ENCODE measurements at regions of chr12 and their contacts with region 1.

Region 1: GRCh38 chr12:38906482-38907170 is 1.2 kb upstream of the CPNE8 start:
- DNase-seq: peak; percentile 91
- H3K4me3 ChIP-seq: peak overlapping the region; percentile 63 to 86 (median 72)
- H3K27ac ChIP-seq: peak overlapping the region; percentile 72
- H3K4me1 ChIP-seq: peaks cover 13% of the 10 kb centered on the region
- H3K27me3 ChIP-seq: no peaks in the 10 kb centered on the region
- CTCF ChIP-seq: peak; percentile 83 to 96

Region 2: DNA sequence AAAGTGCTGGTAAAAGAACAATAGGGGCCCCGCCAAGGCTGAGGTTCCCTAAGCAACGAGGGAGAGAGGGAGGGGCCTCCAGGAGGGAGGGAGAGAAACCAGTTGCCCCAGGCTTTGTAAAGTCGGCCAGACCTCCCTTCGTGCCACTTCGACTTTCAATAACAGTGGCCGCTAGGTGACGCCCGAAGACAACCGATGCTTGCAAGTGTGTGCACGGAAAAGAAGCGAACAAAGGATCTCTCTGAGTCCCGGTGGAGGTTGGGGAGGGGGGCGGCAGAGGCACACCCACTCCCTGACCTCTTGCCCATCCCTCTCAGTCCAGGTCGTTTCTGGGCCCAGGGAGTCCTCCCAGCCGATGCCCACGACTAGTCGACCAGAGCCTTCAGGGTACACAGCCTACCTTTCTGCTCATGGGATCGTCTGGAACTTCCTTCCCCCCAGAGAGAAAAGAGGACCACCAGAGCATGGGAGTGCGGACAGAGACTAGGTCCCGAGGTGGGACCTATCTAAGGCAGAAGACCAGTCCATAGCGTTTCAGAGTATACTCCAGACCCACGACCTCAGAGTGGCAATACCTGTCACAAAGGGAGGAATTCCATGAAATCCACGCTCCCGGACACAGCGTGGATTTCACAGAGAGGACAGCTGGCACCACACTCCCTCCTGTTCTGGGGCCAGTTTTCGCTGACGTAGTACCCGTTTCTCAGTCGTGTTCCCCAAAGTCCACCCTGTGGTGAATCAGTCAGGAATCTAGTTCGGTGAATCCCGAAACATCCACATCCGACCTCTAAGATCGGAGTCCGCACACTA is 852.8 kb before region 1 on chr12:
- CTCF ChIA-PET with region 1: no interaction called
- dilution Hi-C with region 1: no loop called
- in situ Hi-C with region 1: no loop called
- intact Hi-C with region 1: loop called (anchors 5 kb)
- DNase-seq: peak; percentile 49
- H3K4me3 ChIP-seq: no peak overlapping the region
- H3K27ac ChIP-seq: no peak overlapping the region
- H3K4me1 ChIP-seq: no peaks in the 10 kb centered on the region
- H3K27me3 ChIP-seq: no peaks in the 10 kb centered on the region
- CTCF ChIP-seq: no peak

Region 3: DNA sequence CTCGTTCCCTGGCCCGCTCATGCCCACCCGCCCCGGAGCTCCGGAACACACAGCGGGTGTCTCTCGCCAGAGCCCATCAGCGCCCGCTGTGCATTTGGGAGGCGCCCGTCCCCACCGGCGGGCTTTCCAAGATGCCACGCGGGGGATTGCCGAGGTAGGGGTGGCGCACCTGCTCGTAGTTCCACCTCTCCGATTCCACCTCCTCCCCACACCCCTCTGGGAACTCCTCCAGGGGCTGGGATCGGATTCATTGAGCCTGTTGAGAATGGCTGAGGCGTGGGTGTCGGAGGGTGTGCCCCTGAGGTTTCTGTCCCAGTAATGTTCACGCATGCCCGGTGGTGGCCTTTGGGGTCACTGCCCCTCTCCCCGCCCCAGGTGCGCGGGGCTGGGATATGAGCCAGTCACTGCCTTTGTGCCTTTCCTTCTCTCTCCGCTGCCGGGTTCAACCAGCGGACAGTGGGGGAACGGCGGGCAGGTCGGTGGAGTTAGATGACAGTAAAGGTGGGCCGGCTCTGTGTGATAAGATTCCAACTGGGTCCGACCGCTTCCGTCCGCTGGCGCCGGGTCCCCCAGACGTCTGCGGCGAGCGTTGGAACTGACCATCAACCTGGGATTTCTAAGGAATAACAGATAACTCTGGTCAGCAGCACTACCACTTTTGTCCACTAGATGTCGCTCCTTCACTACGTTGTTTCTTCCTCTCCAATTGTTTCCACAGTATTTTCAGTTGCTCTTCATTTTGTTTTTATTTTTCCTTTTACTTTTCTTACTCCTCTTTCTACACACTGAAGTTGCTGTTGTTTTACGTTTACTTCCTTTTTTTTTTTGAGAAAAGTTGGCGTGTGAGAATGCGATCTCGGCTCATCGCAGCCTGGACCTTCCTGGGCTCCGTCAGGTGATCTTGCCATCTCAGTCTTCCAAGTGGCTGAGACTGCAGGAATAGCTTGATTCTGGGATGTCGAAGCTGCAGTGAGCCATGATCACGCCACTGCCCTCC is 768.1 kb before region 1 on chr12:
- CTCF ChIA-PET with region 1: no interaction called
- dilution Hi-C with region 1: no loop called
- in situ Hi-C with region 1: no loop called
- intact Hi-C with region 1: loop called (anchors 10 kb)
- DNase-seq: peak; percentile 64
- H3K4me3 ChIP-seq: peak overlapping the region; percentile 61 to 87 (median 78)
- H3K27ac ChIP-seq: peak overlapping the region; percentile 52
- H3K4me1 ChIP-seq: no peaks in the 10 kb centered on the region
- H3K27me3 ChIP-seq: no peaks in the 10 kb centered on the region
- CTCF ChIP-seq: peak; percentile 89 to 98

Region 4: DNA sequence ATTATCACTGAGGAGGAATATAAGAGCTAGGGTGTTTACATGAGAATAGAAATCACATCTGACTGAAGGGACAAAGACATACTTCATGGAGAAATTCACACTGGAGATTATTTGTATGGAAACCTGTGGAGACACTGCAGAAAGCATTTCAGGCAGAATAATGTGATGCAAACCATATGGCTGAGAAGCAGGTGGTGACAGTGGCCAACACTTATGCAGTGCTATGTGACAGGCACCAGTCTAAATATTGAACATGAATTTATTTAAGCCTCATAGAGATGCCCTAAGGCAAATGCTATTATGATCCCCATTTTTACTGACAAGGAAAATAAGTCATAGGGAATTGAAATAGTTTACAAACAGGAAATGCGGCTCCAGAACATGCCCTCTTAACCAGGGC is 573.8 kb before region 1 on chr12:
- CTCF ChIA-PET with region 1: no interaction called
- dilution Hi-C with region 1: no loop called
- in situ Hi-C with region 1: loop called (anchors 10 to 25 kb)
- intact Hi-C with region 1: loop called (anchors 2 kb)
- DNase-seq: no peak
- H3K4me3 ChIP-seq: no peak overlapping the region
- H3K27ac ChIP-seq: no peak overlapping the region
- H3K4me1 ChIP-seq: no peaks in the 10 kb centered on the region
- H3K27me3 ChIP-seq: no peaks in the 10 kb centered on the region
- CTCF ChIP-seq: no peak

Region 5: DNA sequence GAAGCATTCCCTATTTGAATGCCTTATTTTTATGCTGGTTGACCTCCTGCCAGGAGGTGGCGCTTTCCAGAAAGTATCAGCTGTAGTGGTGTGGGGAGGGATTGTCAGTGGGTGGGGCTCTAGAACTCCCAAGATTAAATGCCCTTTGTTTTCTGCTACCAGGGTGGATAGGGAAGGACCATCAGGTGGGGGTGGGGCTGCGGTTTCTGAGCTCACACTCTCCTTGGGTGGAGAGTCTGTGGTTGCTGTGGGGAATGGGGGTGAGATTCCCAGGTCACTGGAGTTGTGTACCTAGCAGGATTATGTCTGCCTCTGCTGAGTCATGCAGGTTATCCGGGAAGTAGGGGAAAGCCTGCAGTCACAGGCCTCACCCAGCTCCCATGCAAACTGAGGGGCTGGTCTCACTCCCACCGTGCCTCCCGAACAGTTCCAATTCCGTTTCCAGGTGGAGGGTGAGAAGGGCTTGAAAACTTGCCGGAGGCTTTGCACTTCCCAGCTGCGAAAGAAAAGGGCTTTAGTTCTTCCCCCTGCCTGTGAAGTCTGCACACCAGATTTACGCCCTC is 521.7 kb before region 1 on chr12:
- CTCF ChIA-PET with region 1: no interaction called
- dilution Hi-C with region 1: no loop called
- in situ Hi-C with region 1: no loop called
- intact Hi-C with region 1: loop called (anchors 5 kb)
- DNase-seq: peak; percentile 98
- H3K4me3 ChIP-seq: no peak overlapping the region
- H3K27ac ChIP-seq: peak overlapping the region; percentile 32
- H3K4me1 ChIP-seq: peaks cover 8% of the 10 kb centered on the region
- H3K27me3 ChIP-seq: no peaks in the 10 kb centered on the region
- CTCF ChIP-seq: peak in 1 of 2 donors; percentile 32

Region 6: DNA sequence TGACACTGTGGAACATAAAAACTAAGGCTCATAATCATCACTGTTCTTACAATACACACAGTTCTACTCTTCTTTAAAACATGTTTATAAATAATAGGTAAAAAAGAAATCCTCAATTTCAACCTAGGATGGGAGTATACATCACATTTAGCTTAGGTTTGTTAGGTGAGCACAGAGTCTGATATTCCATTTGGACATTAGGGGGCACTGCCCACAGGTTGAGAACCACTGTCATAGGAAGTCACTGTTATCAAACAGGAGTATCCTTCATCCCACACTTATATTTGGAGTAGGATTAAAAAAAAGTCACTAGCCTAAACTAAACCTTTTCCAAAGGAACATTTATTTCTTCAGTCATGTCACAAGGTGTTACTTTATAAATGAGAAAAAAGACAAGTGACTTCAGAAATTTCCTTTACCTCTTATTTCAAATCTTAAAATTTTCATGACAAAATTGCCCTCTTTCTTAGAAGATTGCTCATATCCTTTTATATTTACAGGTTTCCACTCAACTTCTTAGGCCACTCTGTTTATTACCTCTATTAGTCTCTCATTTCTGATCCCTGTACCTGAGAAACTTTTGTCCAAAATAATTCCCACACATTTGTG is 241.9 kb before region 1 on chr12:
- CTCF ChIA-PET with region 1: interaction called, 4 read pairs
- dilution Hi-C with region 1: no loop called
- in situ Hi-C with region 1: loop called in 1 of 2 experiments (anchors 25 kb)
- intact Hi-C with region 1: loop called (anchors 1 kb)
- DNase-seq: peak; percentile 24
- H3K4me3 ChIP-seq: no peak overlapping the region
- H3K27ac ChIP-seq: no peak overlapping the region
- H3K4me1 ChIP-seq: no peaks in the 10 kb centered on the region
- H3K27me3 ChIP-seq: no peaks in the 10 kb centered on the region
- CTCF ChIP-seq: peak; percentile 63 to 73

Region 7: GRCh38 chr12:39272871-39273770 is 366.5 kb after region 1 on chr12:
- CTCF ChIA-PET with region 1: no interaction called
- dilution Hi-C with region 1: no loop called
- in situ Hi-C with region 1: loop called in 1 of 2 experiments (anchors 10 kb)
- intact Hi-C with region 1: loop called (anchors 5 kb)
- DNase-seq: peak; percentile 35
- H3K4me3 ChIP-seq: no peak overlapping the region
- H3K27ac ChIP-seq: no peak overlapping the region
- H3K4me1 ChIP-seq: no peaks in the 10 kb centered on the region
- H3K27me3 ChIP-seq: no peaks in the 10 kb centered on the region
- CTCF ChIP-seq: peak; percentile 58 to 70